ENCODE measurements at regions of chr9 and their contacts with region 1.

Region 1: GRCh38 chr9:133589454-133590227 is 19.5 kb downstream of the FAM163B start:
- DNase-seq: peak; percentile 39 to 95
- H3K4me3 ChIP-seq: no peak overlapping the region
- H3K27ac ChIP-seq: no peak overlapping the region
- H3K4me1 ChIP-seq: peaks cover 0 to 16% (median 14%) of the 10 kb centered on the region in 4 experiments; a peak in 6 of 7 replicates
- H3K27me3 ChIP-seq: no peaks in the 10 kb centered on the region
- CTCF ChIP-seq: peak in 2 of 3 experiments; percentile 83 to 97; a peak in 3 of 4 replicates
- EP300 ChIP-seq: no peak
- POLR2A ChIP-seq: no peak
- RAD21 ChIP-seq: peak; percentile 54 to 66; a peak in 3 of 4 replicates

Region 2: DNA sequence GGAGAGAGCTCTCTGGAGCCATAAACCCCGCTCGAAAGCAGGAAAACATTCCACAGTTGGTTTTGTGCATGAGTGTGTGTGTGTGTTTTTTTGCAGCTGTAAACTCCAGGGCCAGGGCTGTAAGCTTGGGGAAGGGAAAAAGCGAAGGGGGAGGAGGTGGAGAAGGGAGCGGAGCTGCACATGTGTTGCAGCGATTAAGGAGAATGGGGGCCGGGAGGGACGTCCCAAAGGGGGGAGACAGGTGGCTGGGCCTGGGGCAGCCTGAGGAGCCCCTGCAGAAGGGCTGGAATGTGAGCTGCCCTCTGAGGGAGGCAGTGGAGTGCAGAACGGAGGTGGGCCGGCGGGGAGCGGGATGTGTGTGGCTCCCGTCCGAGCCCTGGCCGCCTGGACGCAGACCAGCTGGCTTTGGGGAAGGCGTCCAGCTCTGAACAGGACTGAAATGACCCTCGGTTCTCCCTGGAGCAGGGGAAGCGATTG is 62.2 kb before region 1 on chr9:
- CTCF ChIA-PET with region 1: interaction called, 19 read pairs
- POLR2A ChIA-PET with region 1: no interaction called
- DNase-seq: no peak
- H3K4me3 ChIP-seq: no peak overlapping the region; a peak in 1 of 8 replicates
- H3K27ac ChIP-seq: no peak overlapping the region
- H3K4me1 ChIP-seq: peaks cover 4 to 33% (median 30%) of the 10 kb centered on the region in 4 experiments
- H3K27me3 ChIP-seq: peaks cover 0 to 5% (median 2%) of the 10 kb centered on the region in 4 experiments; a peak in 4 of 7 replicates
- CTCF ChIP-seq: no peak
- EP300 ChIP-seq: no peak
- POLR2A ChIP-seq: no peak
- RAD21 ChIP-seq: no peak

Region 3: GRCh38 chr9:133538851-133539833 is 50.5 kb before region 1 on chr9:
- CTCF ChIA-PET with region 1: interaction called, 19 read pairs
- POLR2A ChIA-PET with region 1: interaction called, 4 read pairs
- DNase-seq: no peak
- H3K4me3 ChIP-seq: no peak overlapping the region
- H3K27ac ChIP-seq: no peak overlapping the region
- H3K4me1 ChIP-seq: peaks cover 0 to 35% (median 16%) of the 10 kb centered on the region in 4 experiments; a peak in 6 of 7 replicates
- H3K27me3 ChIP-seq: peaks cover 0 to 16% (median 11%) of the 10 kb centered on the region in 4 experiments; a peak in 3 of 7 replicates
- CTCF ChIP-seq: no peak
- EP300 ChIP-seq: no peak
- POLR2A ChIP-seq: no peak
- RAD21 ChIP-seq: no peak

Region 4: DNA sequence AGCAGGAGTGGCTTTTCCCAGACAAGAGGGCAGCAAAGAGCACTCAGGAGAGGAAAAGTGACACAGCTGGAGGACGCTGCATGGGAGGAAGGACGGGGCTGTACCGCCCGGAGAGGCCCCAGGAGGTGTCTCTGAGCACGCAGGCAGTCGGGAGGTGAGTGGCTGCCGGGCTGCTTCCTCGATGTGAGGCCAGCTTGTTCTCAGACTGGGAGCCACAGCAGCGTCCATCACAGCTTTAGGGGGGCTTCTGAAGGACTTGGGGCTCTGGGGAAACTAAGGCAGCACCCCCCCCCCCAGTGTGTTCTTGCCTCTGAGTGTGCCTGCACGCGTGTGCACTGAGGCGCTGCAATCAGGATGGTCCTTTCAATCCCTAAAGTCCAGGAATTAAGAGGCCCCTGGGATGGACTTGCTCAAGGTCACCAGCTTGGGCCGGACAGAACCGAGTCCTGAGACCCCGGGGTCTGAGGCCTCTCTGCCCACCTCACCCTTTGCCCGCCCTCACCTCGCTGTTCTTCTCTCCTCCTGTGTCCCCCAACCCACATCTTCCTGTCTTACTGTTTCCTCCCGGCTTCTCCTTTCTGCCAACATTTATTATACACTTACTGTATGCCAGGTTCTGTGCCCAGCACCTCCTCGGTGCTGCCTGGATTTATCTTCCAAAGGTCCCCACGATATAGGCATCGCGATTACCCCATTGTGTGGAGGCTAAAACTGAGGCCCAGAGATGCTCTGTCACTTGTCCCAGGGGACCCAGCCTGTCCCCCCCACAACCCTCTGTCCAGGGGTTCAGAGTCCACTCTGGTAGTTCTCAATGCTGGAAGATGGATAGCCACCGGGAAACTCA is 13.4 kb before region 1 on chr9:
- CTCF ChIA-PET with region 1: interaction called, 46 read pairs
- POLR2A ChIA-PET with region 1: no interaction called
- DNase-seq: no peak
- H3K4me3 ChIP-seq: no peak overlapping the region
- H3K27ac ChIP-seq: no peak overlapping the region
- H3K4me1 ChIP-seq: peaks cover 0 to 8% (median 1%) of the 10 kb centered on the region in 4 experiments; a peak in 5 of 7 replicates
- H3K27me3 ChIP-seq: 0 out of 7 replicates have a peak, but pooled peaks cover 0 to 2% (median 0%) of the 10 kb centered on the region in 4 experiments
- CTCF ChIP-seq: no peak
- EP300 ChIP-seq: no peak
- POLR2A ChIP-seq: no peak
- RAD21 ChIP-seq: no peak

Region 5: GRCh38 chr9:133709015-133709611 is 119.5 kb after region 1 on chr9:
- CTCF ChIA-PET with region 1: interaction called, 29 read pairs
- POLR2A ChIA-PET with region 1: interaction called, 3 read pairs
- DNase-seq: no peak
- H3K4me3 ChIP-seq: no peak overlapping the region
- H3K27ac ChIP-seq: no peak overlapping the region
- H3K4me1 ChIP-seq: peaks cover 0 to 3% (median 0%) of the 10 kb centered on the region in 4 experiments; a peak in 1 of 7 replicates
- H3K27me3 ChIP-seq: no peaks in the 10 kb centered on the region
- CTCF ChIP-seq: peak in 2 of 3 experiments; percentile 19 to 28; a peak in 2 of 4 replicates
- EP300 ChIP-seq: no peak
- POLR2A ChIP-seq: no peak
- RAD21 ChIP-seq: peak; percentile 43 to 61

Region 6: DNA sequence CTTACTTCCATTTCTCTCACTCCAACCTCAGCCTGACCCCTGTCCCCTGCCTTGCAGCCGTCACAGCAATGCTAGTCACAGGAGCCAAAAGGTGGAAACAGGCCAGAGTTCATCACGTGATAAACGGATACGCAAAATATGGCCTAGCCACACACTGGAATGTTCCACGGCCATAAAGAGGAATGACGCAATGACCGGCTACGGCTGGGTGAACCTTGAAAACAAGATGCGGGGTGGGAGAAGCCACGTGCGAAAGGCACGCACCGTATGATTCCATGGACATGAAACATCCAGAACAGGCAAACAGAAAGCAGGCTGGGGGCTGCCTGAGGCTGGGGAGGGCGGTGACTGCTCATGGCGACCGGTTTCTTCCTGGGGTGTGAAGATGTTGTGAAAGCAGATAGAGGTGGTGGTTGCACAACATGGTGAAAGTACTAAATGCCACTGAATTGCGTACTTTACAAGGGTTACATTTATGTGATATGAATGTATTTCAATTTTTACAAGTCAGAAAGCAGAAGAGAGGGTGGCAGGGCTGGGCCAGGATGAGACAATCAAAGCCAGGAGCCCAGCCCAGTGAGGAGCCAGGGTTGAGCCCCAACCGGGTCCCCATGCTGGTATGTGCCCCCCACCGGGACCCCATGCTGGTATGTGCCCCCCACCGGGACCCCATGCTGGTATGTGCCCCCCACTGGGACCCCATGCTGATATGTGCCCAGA is 266.3 kb after region 1 on chr9:
- CTCF ChIA-PET with region 1: no interaction called
- POLR2A ChIA-PET with region 1: no interaction called
- DNase-seq: no peak
- H3K4me3 ChIP-seq: no peak overlapping the region
- H3K27ac ChIP-seq: no peak overlapping the region
- H3K4me1 ChIP-seq: peaks cover 0 to 4% (median 0%) of the 10 kb centered on the region in 4 experiments; a peak in 3 of 7 replicates
- H3K27me3 ChIP-seq: no peaks in the 10 kb centered on the region
- CTCF ChIP-seq: no peak
- EP300 ChIP-seq: no peak
- POLR2A ChIP-seq: no peak
- RAD21 ChIP-seq: no peak

Measured in H1 (cell line).